RWPE1 (cell line): ENCODE measurements at regions of chr14 and their contacts with region 1.

Region 1: DNA sequence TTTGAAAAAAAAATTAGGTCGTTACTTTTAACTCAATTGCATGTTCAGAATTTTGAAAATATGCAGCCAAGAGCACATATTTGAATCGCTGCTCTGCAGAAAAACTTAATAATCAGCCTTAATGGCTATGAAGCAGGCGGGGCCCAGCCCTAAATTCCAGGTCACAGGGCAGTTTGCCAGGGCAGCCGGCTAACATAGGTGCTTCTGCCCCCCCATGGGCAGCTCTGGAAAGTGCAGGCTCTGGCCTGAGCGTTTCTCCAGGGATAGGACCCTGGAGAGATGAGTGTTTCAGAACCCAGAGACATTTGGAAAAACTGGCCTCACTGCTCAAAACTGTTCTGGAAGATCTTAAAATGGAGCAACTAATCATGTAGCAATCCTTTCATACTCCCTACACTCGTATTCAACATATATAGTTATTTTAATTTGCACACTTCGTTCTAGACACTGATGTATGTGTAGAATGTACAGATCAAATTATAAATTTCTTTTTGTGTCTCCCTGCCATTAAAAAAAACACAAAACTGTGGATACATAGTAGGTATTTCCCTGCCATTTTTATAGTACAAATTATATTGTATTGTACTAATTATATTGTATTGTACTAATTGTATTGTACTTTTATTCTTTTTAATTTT is 26.0 kb upstream of the PTGR2 start:
- DNase-seq: peak; percentile 90
- H3K27ac ChIP-seq: peak overlapping the region; percentile 52
- CTCF ChIP-seq: peak; percentile 96

Region 2: DNA sequence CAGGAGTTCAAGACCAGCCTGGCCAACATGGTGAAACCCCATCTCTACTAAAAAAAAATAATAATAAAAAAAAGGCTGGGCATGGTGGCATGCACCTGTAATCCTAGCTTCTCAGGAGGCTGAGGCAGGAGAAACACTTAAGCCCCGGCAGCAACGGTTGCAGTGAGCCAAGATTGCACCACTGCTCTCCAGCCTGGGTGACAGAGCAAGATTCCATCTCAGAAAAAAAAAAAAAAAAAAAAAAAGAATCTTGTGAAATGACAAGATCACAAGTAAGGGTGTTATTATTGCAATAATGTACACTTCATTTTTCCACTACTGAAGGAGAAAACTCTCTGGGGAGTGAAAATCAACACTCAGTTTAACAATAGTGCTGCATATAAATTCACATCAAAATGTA is 17.2 kb after region 1 on chr14:
- CTCF ChIA-PET with region 1: interaction called, 10 read pairs
- POLR2A ChIA-PET with region 1: no interaction called
- DNase-seq: no peak
- H3K27ac ChIP-seq: no peak overlapping the region
- CTCF ChIP-seq: no peak